AG04450 (cell line): ENCODE measurements at regions of chr12 and their contacts with region 1.

Region 1: DNA sequence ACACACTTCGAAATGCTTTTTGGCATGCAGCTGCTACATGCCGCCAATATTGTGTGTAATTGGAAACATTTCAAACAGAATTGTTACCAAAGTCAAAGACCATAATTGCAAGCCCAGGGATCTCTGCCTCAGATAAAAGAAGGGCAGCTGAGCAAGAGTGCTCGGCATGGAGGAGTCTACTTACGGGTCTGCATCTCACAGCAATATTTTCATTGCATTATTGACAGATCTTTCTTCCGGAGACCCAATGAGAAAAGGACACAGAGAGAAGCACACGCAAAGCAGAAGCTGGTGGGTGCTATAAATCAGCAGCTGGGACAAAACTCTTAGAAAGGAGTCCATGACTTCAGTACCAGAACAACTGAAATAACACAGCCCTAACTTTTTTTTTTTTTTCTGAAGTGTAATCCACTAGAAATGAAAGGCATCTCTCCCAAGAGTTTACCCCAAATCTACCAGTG is 4.9 kb downstream of the PRICKLE1 start:
- DNase-seq: no peak
- H3K4me3 ChIP-seq: peak overlapping the region; percentile 21
- H3K27ac ChIP-seq: no peak overlapping the region
- H3K27me3 ChIP-seq: no peaks in the 10 kb centered on the region
- CTCF ChIP-seq: no peak

Region 2: GRCh38 chr12:42568952-42569915 is 15.4 kb before region 1 on chr12:
- CTCF ChIA-PET with region 1: interaction called, 30 read pairs
- POLR2A ChIA-PET with region 1: no interaction called
- DNase-seq: no peak
- H3K4me3 ChIP-seq: no peak overlapping the region
- H3K27ac ChIP-seq: no peak overlapping the region
- H3K27me3 ChIP-seq: no peaks in the 10 kb centered on the region
- CTCF ChIP-seq: peak; percentile 66